IMR-90 (cell line): ENCODE measurements at regions of chr11 and their contacts with region 1.

Region 1: DNA sequence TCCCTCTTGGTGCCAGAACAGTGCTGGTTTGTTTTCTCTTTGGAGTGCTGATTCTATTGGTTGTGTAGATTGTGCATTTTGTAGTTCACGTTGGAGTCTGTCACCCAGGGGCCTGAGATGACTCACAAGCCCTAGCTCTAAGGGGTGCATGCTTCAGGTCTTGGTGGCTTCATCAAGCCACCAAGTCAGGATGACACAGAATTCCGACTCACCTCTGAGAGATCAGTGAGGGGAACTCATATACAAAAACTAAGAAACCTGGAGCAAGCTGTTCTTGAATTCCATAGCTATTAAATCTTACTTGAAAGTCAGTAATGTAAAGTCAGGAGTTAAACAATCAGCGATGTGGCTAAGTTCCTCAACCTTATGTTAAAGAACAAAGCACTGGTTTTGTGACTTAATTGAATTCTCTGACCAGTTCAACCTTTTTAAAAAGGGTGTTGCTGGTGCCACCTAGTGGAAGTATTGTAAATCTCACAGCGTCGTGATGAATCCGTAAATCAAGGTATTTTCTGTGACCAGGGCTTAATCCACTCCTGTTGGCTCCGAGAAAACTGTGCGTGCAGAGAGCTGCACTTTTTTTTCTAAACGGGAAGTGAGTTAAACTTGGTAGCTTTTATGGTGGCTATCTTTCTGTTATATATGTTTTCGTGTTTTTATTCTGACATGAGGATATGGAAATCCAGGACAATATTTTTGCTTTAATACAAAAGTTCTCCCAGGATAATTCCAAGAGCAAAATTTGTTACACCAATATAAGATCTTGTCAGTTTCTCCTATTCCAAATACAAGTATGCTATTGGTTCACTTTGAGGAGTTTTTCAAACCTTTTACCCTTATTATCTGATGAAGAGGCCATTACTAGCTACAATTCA is 14.6 kb downstream of the MMP13 start:
- DNase-seq: peak; percentile 73
- ATAC-seq: peak; percentile 88
- H3K4me3 ChIP-seq: no peak overlapping the region
- H3K27ac ChIP-seq: no peak overlapping the region
- H3K4me1 ChIP-seq: no peaks in the 10 kb centered on the region
- H3K27me3 ChIP-seq: peaks cover 1% of the 10 kb centered on the region
- CTCF ChIP-seq: peak; percentile 80
- POLR2A ChIP-seq: no peak
- RAD21 ChIP-seq: peak; percentile 80

Region 2: DNA sequence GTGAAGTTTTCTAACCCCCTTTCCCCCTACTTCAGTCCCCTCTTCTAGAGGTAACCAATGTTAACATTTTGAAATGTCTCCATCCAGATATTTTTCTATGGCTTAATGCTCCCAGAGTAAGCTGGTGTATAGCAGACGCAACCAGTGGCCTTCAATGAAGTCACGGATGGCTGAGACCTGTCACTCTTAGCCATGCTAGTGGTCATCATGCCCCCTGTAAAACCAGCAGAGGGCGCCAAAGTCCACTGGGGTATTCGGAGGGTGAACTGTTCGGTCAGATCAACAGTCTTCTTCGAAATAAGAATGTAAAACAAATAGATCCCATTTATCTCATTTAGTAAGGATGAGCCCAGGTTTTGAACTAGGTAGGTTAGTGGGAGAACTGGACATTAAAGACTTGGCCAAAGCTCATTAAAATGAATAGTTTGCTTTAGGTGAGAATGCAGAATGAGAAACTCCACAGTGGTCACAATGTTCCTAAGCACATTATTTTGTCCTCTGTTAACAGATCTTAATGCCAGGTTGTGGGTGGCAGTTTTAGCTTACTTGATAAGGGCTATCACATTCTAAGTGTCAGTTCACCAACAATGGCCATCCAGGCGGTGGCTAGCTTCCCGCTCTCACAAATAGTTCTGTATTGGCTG is 207.6 kb before region 1 on chr11:
- CTCF ChIA-PET with region 1: interaction called, 3 read pairs
- POLR2A ChIA-PET with region 1: no interaction called
- dilution Hi-C with region 1: no loop called
- in situ Hi-C with region 1: no loop called
- intact Hi-C with region 1: loop called (anchors 2 kb)
- DNase-seq: peak; percentile 47
- ATAC-seq: peak; percentile 73
- H3K4me3 ChIP-seq: no peak overlapping the region
- H3K27ac ChIP-seq: no peak overlapping the region
- H3K4me1 ChIP-seq: peaks cover 8% of the 10 kb centered on the region
- H3K27me3 ChIP-seq: peaks cover 16% of the 10 kb centered on the region
- CTCF ChIP-seq: peak; percentile 71
- POLR2A ChIP-seq: no peak
- RAD21 ChIP-seq: peak; percentile 80

Region 3: GRCh38 chr11:102810945-102811660 is 129.8 kb before region 1 on chr11:
- CTCF ChIA-PET with region 1: interaction called, 10 read pairs
- POLR2A ChIA-PET with region 1: no interaction called
- dilution Hi-C with region 1: no loop called
- in situ Hi-C with region 1: no loop called
- intact Hi-C with region 1: loop called (anchors 2 kb)
- DNase-seq: peak; percentile 45
- ATAC-seq: peak; percentile 89
- H3K4me3 ChIP-seq: no peak overlapping the region
- H3K27ac ChIP-seq: no peak overlapping the region
- H3K4me1 ChIP-seq: no peaks in the 10 kb centered on the region
- H3K27me3 ChIP-seq: peaks cover 3% of the 10 kb centered on the region
- CTCF ChIP-seq: peak; percentile 53
- POLR2A ChIP-seq: no peak
- RAD21 ChIP-seq: peak; percentile 52